Activated CD8-positive, alpha-beta memory T cell treated with anti-CD3 and anti-CD28 coated beads, Interleukin-2, amount 10 ng/mL, durations not matched to agents 7 days and 5 days (primary cell): ENCODE measurements at regions of chr10 and their contacts with region 1.

Region 1: GRCh38 chr10:79266543-79267312 is 80.5 kb upstream of the PPIF start:
- DNase-seq: peak; percentile 82
- ATAC-seq: peak; percentile 84
- H3K4me3 Mint-ChIP-seq: no peak overlapping the region
- H3K27ac Mint-ChIP-seq: peak overlapping the region; percentile 86
- H3K4me1 Mint-ChIP-seq: peaks cover 56% of the 10 kb centered on the region
- H3K27me3 Mint-ChIP-seq: no peaks in the 10 kb centered on the region

Region 2: GRCh38 chr10:79209340-79209739 is 57.4 kb before region 1 on chr10:
- CTCF ChIA-PET with region 1: no interaction called
- DNase-seq: no peak
- ATAC-seq: no peak
- H3K4me3 Mint-ChIP-seq: no peak overlapping the region
- H3K27ac Mint-ChIP-seq: no peak overlapping the region
- H3K4me1 Mint-ChIP-seq: no peaks in the 10 kb centered on the region
- H3K27me3 Mint-ChIP-seq: no peaks in the 10 kb centered on the region

Region 3: GRCh38 chr10:79249186-79250121 is 17.3 kb before region 1 on chr10:
- CTCF ChIA-PET with region 1: interaction called, 18 read pairs
- DNase-seq: peak; percentile 69
- ATAC-seq: peak; percentile 77
- H3K4me3 Mint-ChIP-seq: peak overlapping the region; percentile 58
- H3K27ac Mint-ChIP-seq: peak overlapping the region; percentile 99
- H3K4me1 Mint-ChIP-seq: peaks cover 82% of the 10 kb centered on the region
- H3K27me3 Mint-ChIP-seq: no peaks in the 10 kb centered on the region